MCF 10A (cell line): ENCODE measurements at regions of chr16 and their contacts with region 1.

Region 1: GRCh38 chr16:66406534-66407221 is 20.4 kb upstream of the BEAN1 start:
- DNase-seq: peak; percentile 74
- H3K4me3 Mint-ChIP-seq: peak overlapping the region; percentile 72
- H3K27ac Mint-ChIP-seq: peak overlapping the region; percentile 37
- H3K4me1 Mint-ChIP-seq: peaks cover 24% of the 10 kb centered on the region
- H3K27me3 Mint-ChIP-seq: no peaks in the 10 kb centered on the region
- CTCF ChIP-seq: peak; percentile 83

Region 2: DNA sequence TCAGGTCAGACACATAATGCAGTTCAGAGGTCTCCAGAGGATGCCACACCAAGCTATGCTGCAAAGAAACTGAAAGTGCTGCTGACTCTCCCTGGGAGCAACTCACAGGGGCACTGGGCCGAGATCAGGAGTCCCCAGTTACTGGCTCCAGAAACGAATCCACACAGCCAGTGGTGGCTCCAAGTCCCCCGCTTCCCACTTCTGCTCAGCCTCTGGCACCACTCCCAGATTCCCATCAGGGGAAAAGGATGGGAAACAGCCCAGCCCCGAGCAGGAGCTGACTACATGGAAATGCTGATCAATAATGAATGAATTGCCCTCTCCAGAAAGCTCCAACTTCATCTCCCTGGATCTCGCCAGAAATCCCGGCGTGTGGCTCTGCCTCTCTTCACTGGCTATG is 102.5 kb before region 1 on chr16:
- CTCF ChIA-PET with region 1: no interaction called
- POLR2A ChIA-PET with region 1: no interaction called
- intact Hi-C with region 1: no loop called
- DNase-seq: no peak
- H3K4me3 Mint-ChIP-seq: no peak overlapping the region
- H3K27ac Mint-ChIP-seq: no peak overlapping the region
- H3K4me1 Mint-ChIP-seq: no peaks in the 10 kb centered on the region
- H3K27me3 Mint-ChIP-seq: peaks cover 33% of the 10 kb centered on the region
- CTCF ChIP-seq: no peak

Region 3: GRCh38 chr16:66386629-66387622 is 19.8 kb before region 1 on chr16:
- CTCF ChIA-PET with region 1: interaction called, 19 read pairs
- POLR2A ChIA-PET with region 1: no interaction called
- intact Hi-C with region 1: no loop called
- DNase-seq: no peak
- H3K4me3 Mint-ChIP-seq: no peak overlapping the region
- H3K27ac Mint-ChIP-seq: no peak overlapping the region
- H3K4me1 Mint-ChIP-seq: peaks cover 19% of the 10 kb centered on the region
- H3K27me3 Mint-ChIP-seq: no peaks in the 10 kb centered on the region
- CTCF ChIP-seq: no peak

Region 4: DNA sequence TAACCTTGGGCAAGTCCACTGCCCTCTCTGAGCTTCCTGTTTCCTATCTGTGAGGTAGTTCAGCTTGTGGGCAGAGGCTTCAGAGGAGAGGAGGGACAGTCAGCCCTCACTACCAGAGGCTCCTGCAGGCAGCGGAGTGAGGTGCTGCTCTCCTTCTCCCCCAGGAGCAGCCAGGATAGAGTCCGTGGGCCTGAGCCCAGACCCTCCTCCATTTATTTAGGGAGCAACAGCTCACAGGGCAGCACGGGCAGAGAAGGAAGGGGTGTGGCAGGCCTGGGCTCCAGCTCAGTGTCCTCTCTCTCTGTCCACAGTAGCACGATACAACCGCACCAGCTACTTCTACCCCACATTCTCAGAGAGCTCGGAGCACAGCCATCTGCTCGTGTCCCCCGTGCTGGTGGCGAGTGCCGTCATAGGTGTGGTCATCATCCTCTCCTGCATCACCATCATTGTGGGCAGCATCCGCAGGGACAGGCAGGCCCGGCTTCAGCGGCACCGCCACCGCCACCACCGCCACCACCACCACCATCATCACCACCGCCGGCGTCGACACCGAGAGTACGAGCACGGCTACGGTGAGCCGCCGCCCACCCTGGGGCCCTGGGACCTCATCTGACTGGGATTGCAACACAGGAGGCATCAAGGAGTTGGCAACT is 62.7 kb after region 1 on chr16:
- CTCF ChIA-PET with region 1: interaction called, 61 read pairs
- POLR2A ChIA-PET with region 1: no interaction called
- intact Hi-C with region 1: no loop called
- DNase-seq: no peak
- H3K4me3 Mint-ChIP-seq: no peak overlapping the region
- H3K27ac Mint-ChIP-seq: no peak overlapping the region
- H3K4me1 Mint-ChIP-seq: peaks cover 6% of the 10 kb centered on the region
- H3K27me3 Mint-ChIP-seq: no peaks in the 10 kb centered on the region
- CTCF ChIP-seq: no peak

Region 5: GRCh38 chr16:66483689-66484481 is 77.2 kb after region 1 on chr16:
- CTCF ChIA-PET with region 1: interaction called, 189 read pairs
- POLR2A ChIA-PET with region 1: interaction called, 25 read pairs
- intact Hi-C with region 1: loop called (anchors 1 kb)
- DNase-seq: peak; percentile 73
- H3K4me3 Mint-ChIP-seq: no peak overlapping the region
- H3K27ac Mint-ChIP-seq: no peak overlapping the region
- H3K4me1 Mint-ChIP-seq: peaks cover 33% of the 10 kb centered on the region
- H3K27me3 Mint-ChIP-seq: no peaks in the 10 kb centered on the region
- CTCF ChIP-seq: peak; percentile 96

Region 6: GRCh38 chr16:66511615-66512500 is 105.2 kb after region 1 on chr16:
- CTCF ChIA-PET with region 1: interaction called, 11 read pairs
- POLR2A ChIA-PET with region 1: interaction called, 19 read pairs
- intact Hi-C with region 1: loop called (anchors 2 kb)
- DNase-seq: peak; percentile 79
- H3K4me3 Mint-ChIP-seq: peak overlapping the region; percentile 40
- H3K27ac Mint-ChIP-seq: peak overlapping the region; percentile 85
- H3K4me1 Mint-ChIP-seq: peaks cover 62% of the 10 kb centered on the region
- H3K27me3 Mint-ChIP-seq: no peaks in the 10 kb centered on the region
- CTCF ChIP-seq: peak; percentile 20

Region 7: DNA sequence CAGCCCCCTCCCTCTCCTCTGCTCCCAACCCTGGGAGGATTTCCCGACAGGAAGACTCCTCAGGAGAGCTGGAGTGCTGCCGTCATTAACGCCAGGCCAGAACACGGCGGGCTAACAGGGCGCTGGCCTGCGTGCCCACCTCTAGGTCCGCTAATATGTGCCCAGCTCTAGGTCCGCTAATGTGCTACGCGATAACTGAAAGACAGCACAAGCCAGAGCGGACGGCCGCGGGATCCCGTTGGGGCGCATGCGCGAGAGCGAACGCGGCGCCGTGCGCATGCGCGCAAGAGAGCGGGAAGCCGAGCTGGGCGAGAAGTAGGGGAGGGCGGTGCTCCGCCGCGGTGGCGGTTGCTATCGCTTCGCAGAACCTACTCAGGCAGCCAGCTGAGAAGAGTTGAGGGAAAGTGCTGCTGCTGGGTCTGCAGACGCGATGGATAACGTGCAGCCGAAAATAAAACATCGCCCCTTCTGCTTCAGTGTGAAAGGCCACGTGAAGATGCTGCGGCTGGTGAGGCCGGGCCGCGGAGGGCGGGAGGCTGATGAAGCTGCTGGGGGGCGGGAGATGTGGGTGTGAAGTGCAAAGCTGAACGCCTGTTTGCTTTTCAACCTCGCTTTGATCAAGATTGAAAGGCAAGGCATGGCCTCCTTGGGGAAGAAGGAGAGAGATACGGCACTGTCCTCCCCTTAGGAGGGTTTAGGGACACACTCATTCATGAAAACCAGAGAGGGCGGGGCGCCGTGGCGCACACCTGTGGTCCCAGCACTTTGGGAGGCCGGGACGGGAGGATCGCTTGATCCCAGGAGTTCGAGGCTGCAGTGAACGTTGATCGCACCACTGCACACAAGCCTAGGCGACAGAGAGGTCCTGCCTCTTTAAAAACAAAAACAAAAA is 145.9 kb after region 1 on chr16 and contains the start of gene CKLF:
- CTCF ChIA-PET with region 1: interaction called, 17 read pairs
- POLR2A ChIA-PET with region 1: interaction called, 65 read pairs
- intact Hi-C with region 1: loop called (anchors 10 kb)
- DNase-seq: peak; percentile 88
- H3K4me3 Mint-ChIP-seq: peak within 1 kb of the TSS; percentile 89
- H3K27ac Mint-ChIP-seq: peak within 1 kb of the TSS; percentile 86
- H3K4me1 Mint-ChIP-seq: peaks cover 52% of the 10 kb centered on the region
- H3K27me3 Mint-ChIP-seq: no peaks in the 10 kb centered on the region
- CTCF ChIP-seq: no peak
- total RNA-seq, gene CKLF: 41.3 and 57.8 TPM in 2 replicates

Region 8: DNA sequence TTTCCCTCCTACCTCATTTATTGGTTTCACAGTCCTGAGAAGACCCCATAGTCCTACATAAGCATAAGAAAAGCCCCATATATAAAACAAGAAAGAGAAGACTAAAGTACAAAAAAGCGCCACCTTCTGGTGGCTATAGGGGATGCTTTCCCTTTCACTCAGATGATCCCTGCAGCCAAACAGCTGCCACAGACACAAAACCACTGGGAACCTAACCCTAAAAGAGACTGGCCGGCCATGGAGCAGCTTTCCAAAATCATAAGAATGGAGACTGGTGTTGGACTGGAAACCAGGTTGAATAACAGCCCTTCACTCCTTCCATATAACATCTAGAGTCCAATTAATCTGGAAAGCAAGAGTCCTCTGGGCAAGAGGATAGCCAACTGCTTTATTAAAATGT is 333.3 kb after region 1 on chr16:
- CTCF ChIA-PET with region 1: interaction called, 3 read pairs
- POLR2A ChIA-PET with region 1: no interaction called
- intact Hi-C with region 1: loop called (anchors 10 kb)
- DNase-seq: peak; percentile 56
- H3K4me3 Mint-ChIP-seq: no peak overlapping the region
- H3K27ac Mint-ChIP-seq: peak overlapping the region; percentile 66
- H3K4me1 Mint-ChIP-seq: peaks cover 32% of the 10 kb centered on the region
- H3K27me3 Mint-ChIP-seq: no peaks in the 10 kb centered on the region
- CTCF ChIP-seq: peak; percentile 58